RWPE1 (cell line): ENCODE measurements at regions of chr17 and their contacts with region 1.

Region 1: DNA sequence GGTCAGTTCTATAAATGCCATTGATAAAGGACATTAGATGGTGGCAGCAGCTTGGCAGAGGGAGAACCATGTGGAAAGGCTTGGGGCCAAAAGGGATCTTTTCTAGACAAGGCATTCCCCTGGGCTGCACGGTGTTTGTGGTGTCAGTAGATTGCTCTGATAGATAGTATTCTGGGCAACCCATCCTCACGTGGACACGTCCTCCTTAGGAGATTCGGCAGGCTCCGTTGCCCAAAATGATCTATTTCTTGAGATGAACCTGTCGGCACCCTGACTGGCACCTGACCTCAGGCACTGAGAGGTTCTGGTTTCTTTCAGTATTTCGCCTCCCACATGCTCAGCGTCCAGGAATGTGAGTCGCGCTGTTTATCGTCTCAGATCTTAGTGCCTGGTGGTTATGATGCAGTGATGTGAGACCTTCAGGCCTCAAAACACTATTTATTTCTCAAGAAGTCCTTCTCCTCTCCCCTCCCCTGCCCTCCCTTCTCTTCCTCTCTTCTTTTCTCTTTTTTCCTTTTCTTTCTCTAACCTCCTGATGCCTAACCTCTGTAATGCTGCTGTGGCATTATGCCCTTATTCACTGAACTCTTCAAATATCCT is 89.6 kb downstream of the MARCHF10 start:
- DNase-seq: no peak
- H3K27ac ChIP-seq: no peak overlapping the region
- CTCF ChIP-seq: no peak

Region 2: GRCh38 chr17:62704379-62704971 is 14.0 kb before region 1 on chr17:
- CTCF ChIA-PET with region 1: no interaction called
- POLR2A ChIA-PET with region 1: interaction called, 10 read pairs
- DNase-seq: peak; percentile 82
- H3K27ac ChIP-seq: peak overlapping the region; percentile 96
- CTCF ChIP-seq: no peak